ENCODE measurements at regions of chr3 and their contacts with region 1.

Region 1: DNA sequence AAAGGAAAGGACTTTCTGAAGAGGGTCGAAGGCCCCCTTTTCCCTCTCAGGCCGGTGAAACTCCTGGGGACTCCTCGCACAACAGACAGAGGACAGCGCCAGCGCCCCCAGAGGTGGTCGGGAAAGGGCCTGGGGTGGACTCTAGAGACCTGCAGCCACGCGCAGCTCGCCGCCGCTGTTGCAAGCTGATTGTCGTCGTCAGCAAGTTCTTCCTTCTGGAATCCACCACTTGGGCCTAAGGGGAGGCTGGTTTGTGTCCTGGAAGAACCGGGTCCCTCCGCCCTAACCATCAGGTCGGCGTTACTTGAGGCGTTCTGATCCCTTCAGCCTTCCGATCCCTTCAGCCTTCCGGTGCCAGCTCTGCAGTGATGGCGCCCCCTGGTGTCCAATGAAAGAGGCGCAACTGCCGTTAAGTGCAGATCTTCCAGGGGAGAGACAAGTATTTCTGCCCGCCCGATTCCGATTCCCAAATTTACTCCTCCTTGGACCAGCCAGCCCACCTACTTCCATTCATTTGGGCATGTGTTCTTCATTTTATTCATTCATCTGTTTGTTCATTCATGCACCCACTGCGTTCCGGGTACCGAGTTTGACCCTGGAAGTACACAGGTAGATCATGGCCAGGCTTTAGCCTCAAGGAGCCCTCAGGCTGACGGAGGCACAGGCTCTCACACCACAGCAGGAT is 77.2 kb upstream of the SLC6A11 start:
- DNase-seq: peak; percentile 54 to 85 (median 74)
- H3K4me3 ChIP-seq: no peak overlapping the region
- H3K27ac ChIP-seq: no peak overlapping the region
- H3K4me1 ChIP-seq: no peaks in the 10 kb centered on the region
- H3K27me3 ChIP-seq: peaks cover 23% of the 10 kb centered on the region
- CTCF ChIP-seq: peak; percentile 70 to 89 (median 81)
- POLR2A ChIP-seq: no peak

Region 2: GRCh38 chr3:10341901-10342398 is 396.9 kb before region 1 on chr3:
- intact Hi-C with region 1: loop called (anchors 2 to 5 kb)
- DNase-seq: no peak
- H3K4me3 ChIP-seq: no peak overlapping the region
- H3K27ac ChIP-seq: no peak overlapping the region
- H3K4me1 ChIP-seq: no peaks in the 10 kb centered on the region
- H3K27me3 ChIP-seq: no peaks in the 10 kb centered on the region
- CTCF ChIP-seq: no peak
- POLR2A ChIP-seq: no peak

Region 3: GRCh38 chr3:10349801-10350200 is 389.0 kb before region 1 on chr3:
- intact Hi-C with region 1: loop called in 1 of 2 experiments (anchors 5 kb)
- DNase-seq: no peak
- H3K4me3 ChIP-seq: no peak overlapping the region
- H3K27ac ChIP-seq: no peak overlapping the region
- H3K4me1 ChIP-seq: no peaks in the 10 kb centered on the region
- H3K27me3 ChIP-seq: no peaks in the 10 kb centered on the region
- CTCF ChIP-seq: no peak
- POLR2A ChIP-seq: no peak

Region 4: GRCh38 chr3:10417849-10418248 is 321.0 kb before region 1 on chr3:
- intact Hi-C with region 1: loop called in 1 of 2 experiments (anchors 2 kb)
- DNase-seq: peak in 2 of 7 donors; percentile 19 to 24
- H3K4me3 ChIP-seq: no peak overlapping the region
- H3K27ac ChIP-seq: no peak overlapping the region
- H3K4me1 ChIP-seq: no peaks in the 10 kb centered on the region
- H3K27me3 ChIP-seq: no peaks in the 10 kb centered on the region
- CTCF ChIP-seq: peak in 5 of 6 experiments; percentile 29 to 49 (median 38)
- POLR2A ChIP-seq: no peak

Region 5: DNA sequence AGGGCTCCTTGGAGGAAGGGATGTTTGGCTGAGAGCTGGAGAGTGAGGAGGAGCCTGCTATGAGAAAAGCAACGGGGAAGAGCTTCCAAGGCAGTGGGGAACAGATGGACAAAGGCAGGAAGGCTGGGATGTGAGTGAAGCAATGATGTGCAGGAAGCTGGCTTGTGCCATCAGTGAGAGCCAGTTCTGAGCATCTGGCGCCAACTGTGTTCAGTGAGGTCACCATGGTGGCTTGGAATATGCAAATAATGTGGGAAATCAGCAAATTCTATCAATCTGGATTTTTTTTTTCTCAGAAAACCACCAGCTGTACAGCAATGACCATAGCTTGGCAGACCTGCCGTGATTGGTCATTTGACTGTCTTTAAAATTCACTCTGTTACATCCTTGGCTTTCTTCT is 52.8 kb after region 1 on chr3:
- intact Hi-C with region 1: no loop called
- DNase-seq: no peak
- H3K4me3 ChIP-seq: no peak overlapping the region
- H3K27ac ChIP-seq: no peak overlapping the region
- H3K4me1 ChIP-seq: no peaks in the 10 kb centered on the region
- H3K27me3 ChIP-seq: peaks cover 22% of the 10 kb centered on the region
- CTCF ChIP-seq: no peak
- POLR2A ChIP-seq: no peak

Region 6: DNA sequence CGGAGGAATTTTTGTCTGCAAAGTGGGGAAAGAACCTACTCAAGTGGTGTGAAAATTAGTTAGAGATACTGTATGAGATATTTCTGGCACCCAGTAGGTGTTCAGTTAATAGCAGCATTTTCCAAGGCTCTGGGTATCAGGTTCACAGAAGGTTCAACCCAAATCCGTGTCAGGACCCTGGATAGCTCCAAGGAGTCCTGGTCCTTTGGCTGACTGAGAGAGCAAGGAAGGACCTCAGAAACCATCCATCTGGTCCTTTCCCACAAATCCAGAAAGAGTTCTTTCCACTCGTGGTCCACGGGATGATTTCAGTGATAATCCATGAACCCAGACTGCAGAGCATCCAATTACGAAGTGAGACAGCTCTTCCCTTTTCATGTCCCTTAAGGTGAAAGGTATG is 128.6 kb after region 1 on chr3:
- intact Hi-C with region 1: no loop called
- DNase-seq: no peak
- H3K4me3 ChIP-seq: no peak overlapping the region
- H3K27ac ChIP-seq: no peak overlapping the region
- H3K4me1 ChIP-seq: no peaks in the 10 kb centered on the region
- H3K27me3 ChIP-seq: peaks cover 5% of the 10 kb centered on the region
- CTCF ChIP-seq: no peak
- POLR2A ChIP-seq: no peak

Region 7: GRCh38 chr3:11335056-11335608 is 596.3 kb after region 1 on chr3:
- intact Hi-C with region 1: no loop called
- DNase-seq: peak in 3 of 7 donors; percentile 20 to 34 (median 24)
- H3K4me3 ChIP-seq: no peak overlapping the region
- H3K27ac ChIP-seq: no peak overlapping the region
- H3K4me1 ChIP-seq: peaks cover 4 to 9% of the 10 kb centered on the region in 2 donors
- H3K27me3 ChIP-seq: no peaks in the 10 kb centered on the region
- CTCF ChIP-seq: peak; percentile 58 to 84 (median 80)
- POLR2A ChIP-seq: no peak

Measured in adrenal gland (tissue), 19 donors.